ENCODE measurements at regions of chr20 and their contacts with region 1.

Region 1: DNA sequence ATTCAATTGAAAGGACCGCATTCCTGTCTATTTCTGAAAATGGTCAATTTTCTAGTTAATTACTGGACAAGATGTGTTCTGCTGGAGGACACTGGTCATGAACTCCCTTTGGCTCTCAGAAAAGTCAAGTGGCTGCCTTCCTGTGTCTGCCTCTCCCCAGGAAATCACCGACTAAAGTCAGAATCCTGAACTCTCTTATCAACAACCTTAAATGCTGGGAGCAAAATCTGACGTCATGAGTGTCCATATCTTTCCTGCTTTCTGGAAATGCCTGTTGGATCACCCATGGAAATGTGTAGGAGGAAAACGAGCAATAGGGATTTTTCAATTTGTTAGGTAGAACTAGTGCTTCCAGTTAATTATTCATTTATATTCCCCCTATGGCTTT is 53.5 kb upstream of the PLCB1 start:
- DNase-seq: no peak
- H3K4me3 ChIP-seq: no peak overlapping the region
- H3K27ac ChIP-seq: no peak overlapping the region
- H3K4me1 ChIP-seq: no peaks in the 10 kb centered on the region
- H3K27me3 ChIP-seq: no peaks in the 10 kb centered on the region
- CTCF ChIP-seq: no peak
- EP300 ChIP-seq: no peak
- POLR2A ChIP-seq: no peak

Region 2: GRCh38 chr20:8043687-8044282 is 34.7 kb before region 1 on chr20:
- intact Hi-C with region 1: loop called in 1 of 4 experiments (anchors 1 kb)
- DNase-seq: no peak
- H3K4me3 ChIP-seq: no peak overlapping the region
- H3K27ac ChIP-seq: no peak overlapping the region
- H3K4me1 ChIP-seq: no peaks in the 10 kb centered on the region
- H3K27me3 ChIP-seq: no peaks in the 10 kb centered on the region
- CTCF ChIP-seq: peak; percentile 54 to 72 (median 56)
- EP300 ChIP-seq: no peak
- POLR2A ChIP-seq: no peak

Measured in ovary (tissue), 10 donors.